Activated CD4-positive, alpha-beta memory T cell treated with anti-CD3 and anti-CD28 coated beads, Interleukin-2, amount 10 ng/mL, durations not matched to agents 7 days and 5 days (primary cell): ENCODE measurements at regions of chr14 and their contacts with region 1.

Region 1: GRCh38 chr14:23057757-23058653 is 685 bp upstream of the CDH24 start:
- DNase-seq: peak; percentile 89
- H3K4me3 Mint-ChIP-seq: peak overlapping the region; percentile 77
- H3K27ac Mint-ChIP-seq: peak overlapping the region; percentile 58
- H3K4me1 Mint-ChIP-seq: peaks cover 17% of the 10 kb centered on the region
- H3K27me3 Mint-ChIP-seq: peaks cover 8% of the 10 kb centered on the region

Region 2: DNA sequence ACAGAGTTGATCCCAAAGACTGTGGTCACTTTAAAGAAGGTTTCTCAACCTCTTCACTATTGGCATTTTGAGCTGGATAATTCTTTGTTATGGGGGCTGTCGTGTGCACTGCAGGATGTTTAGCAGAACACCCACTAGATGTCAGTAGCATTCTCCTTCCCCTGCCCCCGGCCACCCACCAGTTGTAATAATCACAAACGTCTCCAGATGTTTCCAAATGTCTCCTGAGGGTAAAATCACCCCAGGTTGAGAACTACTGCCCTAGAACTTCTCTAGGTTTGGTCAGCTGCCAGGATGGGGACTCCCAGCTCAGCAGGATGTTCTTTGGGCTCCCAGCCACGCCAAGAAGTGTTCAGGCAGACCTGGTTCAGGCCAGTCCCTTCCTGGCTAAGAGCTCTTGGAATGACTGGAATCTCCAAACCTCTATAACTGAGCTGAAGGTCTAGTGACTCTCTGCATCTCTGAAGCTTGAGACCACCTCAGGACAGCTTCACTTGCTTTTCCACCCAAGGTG is 63.2 kb before region 1 on chr14:
- CTCF ChIA-PET with region 1: interaction called, 332 read pairs
- POLR2A ChIA-PET with region 1: interaction called, 6 read pairs
- DNase-seq: peak; percentile 29
- H3K4me3 Mint-ChIP-seq: no peak overlapping the region
- H3K27ac Mint-ChIP-seq: no peak overlapping the region
- H3K4me1 Mint-ChIP-seq: no peaks in the 10 kb centered on the region
- H3K27me3 Mint-ChIP-seq: no peaks in the 10 kb centered on the region

Region 3: DNA sequence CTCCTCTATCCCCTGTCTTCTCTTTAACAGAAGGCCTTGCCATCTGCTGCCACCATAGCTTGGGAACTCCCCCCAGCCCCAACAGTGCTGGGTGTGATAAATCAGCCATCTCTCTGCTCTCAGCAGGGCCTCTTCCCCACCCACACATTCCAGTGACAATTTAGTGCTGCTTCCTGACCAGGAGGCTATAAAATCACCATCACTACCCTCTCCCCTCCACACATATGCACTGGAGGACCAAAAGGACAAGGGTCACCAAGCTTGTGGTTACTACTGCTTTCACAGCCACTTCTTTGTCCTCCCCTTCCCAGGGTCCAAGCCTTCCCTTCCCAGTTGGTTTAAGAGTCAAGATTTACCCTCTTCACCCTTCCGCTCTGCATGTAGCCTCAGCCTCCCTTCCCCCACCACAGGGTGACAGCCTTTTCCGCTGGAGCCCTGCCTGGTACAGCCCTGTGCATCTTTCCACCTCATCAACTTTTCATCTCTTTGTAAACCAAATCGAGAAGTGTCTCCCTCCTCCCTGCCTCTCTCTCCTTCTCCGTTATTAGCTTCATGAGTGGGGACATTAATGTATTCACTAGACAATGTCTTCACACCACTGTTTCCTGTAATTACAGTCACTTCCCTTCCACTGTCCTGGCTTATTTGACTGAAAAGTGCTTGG is 32.7 kb before region 1 on chr14:
- CTCF ChIA-PET with region 1: interaction called, 13 read pairs
- POLR2A ChIA-PET with region 1: interaction called, 3 read pairs
- DNase-seq: no peak
- H3K4me3 Mint-ChIP-seq: no peak overlapping the region
- H3K27ac Mint-ChIP-seq: peak overlapping the region; percentile 52
- H3K4me1 Mint-ChIP-seq: peaks cover 38% of the 10 kb centered on the region
- H3K27me3 Mint-ChIP-seq: no peaks in the 10 kb centered on the region

Region 4: GRCh38 chr14:23076785-23077408 is 18.9 kb after region 1 on chr14:
- CTCF ChIA-PET with region 1: interaction called, 17 read pairs
- POLR2A ChIA-PET with region 1: interaction called, 15 read pairs
- DNase-seq: no peak
- H3K4me3 Mint-ChIP-seq: no peak overlapping the region
- H3K27ac Mint-ChIP-seq: no peak overlapping the region
- H3K4me1 Mint-ChIP-seq: peaks cover 8% of the 10 kb centered on the region
- H3K27me3 Mint-ChIP-seq: no peaks in the 10 kb centered on the region

Region 5: DNA sequence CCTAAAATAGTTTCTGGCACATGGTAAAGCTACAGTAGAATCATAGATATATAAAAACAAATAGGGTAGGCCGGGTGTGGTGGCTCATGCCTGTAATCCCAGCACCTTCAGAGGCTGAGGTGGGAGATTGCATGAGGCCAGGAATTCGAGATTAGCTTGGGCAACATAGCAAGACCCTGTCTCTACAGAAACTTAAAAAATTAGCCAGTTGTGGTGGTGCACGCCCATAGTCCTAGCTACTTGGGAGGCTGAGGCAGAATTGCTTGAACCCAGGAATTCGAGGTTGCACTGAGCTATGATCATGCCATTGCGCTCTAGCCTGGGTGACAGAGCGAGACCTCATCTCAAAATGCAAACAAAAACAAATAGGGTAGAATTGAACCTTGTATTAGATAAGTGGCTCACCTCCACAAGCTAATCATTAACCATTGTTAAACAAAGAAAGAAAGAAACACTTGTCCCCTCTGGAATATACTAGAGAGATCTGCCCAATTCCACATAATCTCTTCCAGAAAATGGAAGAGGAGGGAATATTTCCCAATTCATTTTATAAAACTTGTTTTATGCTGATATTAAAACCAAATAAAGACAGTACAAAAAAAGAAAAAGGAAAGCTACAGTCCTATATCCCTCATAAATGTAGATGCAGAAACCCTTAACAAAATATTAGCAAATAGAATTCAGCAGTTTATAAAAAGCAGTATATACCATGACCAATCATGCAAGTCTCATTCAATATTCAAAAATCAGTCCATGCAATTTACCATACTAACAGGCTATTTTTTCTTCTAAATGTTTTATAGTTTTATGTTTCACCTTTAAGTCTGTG is 555.5 kb after region 1 on chr14:
- CTCF ChIA-PET with region 1: no interaction called
- POLR2A ChIA-PET with region 1: no interaction called
- DNase-seq: no peak
- H3K4me3 Mint-ChIP-seq: no peak overlapping the region
- H3K27ac Mint-ChIP-seq: no peak overlapping the region
- H3K4me1 Mint-ChIP-seq: peaks cover 23% of the 10 kb centered on the region
- H3K27me3 Mint-ChIP-seq: peaks cover 2% of the 10 kb centered on the region